ENCODE measurements at regions of chr14 and their contacts with region 1.

Region 1: DNA sequence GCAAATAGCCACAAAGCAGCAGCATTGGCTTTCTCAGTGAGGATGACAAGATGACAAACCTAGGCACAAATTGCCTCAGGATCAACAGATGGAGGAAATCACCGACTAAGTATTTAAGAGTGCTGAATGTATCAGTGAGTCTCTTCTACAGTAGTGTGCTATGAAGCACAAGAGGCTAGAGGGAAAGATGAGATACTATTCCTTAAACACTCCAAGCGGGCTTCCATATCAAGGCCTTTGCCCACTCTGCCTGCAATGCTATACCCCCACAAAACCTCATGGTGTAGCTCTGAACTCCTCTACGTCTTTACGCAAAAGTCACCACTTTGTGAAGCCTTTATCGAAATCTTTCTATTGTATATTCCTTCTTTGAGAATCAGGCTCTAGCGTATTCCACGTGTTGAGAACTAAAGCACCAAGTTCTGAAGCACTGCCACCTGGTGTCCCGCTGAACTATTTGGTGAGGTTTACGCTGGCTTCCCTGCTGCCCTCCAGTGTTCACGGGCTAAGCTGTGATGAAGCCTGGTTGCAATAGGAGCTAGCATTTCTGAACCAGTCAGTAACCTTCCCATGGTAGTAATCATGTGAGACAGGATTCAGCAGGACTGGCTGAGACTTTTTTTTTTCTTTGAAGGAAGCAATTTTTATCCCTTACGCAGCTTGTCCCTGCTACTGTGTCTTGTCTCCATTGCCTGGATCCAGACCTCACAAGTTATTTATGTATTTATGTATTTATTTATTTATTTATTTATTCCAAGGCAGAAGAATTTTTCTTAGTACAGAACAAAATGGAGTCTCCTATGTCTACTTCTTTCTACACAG is 426.5 kb upstream of the OR4E1 start:
- DNase-seq: peak; percentile 87
- H3K4me3 ChIP-seq: no peak overlapping the region
- H3K27ac ChIP-seq: no peak overlapping the region
- H3K4me1 ChIP-seq: peaks cover 0 to 37% (median 25%) of the 10 kb centered on the region in 4 donors
- H3K27me3 ChIP-seq: no peaks in the 10 kb centered on the region
- CTCF ChIP-seq: peak; percentile 41 to 64 (median 52)
- EP300 ChIP-seq: no peak
- POLR2A ChIP-seq: no peak

Region 2: GRCh38 chr14:22084393-22085281 is 15.5 kb before region 1 on chr14:
- intact Hi-C with region 1: loop called (anchors 2 kb)
- DNase-seq: no peak
- H3K4me3 ChIP-seq: no peak overlapping the region
- H3K27ac ChIP-seq: no peak overlapping the region
- H3K4me1 ChIP-seq: peaks cover 0 to 6% (median 0%) of the 10 kb centered on the region in 4 donors
- H3K27me3 ChIP-seq: no peaks in the 10 kb centered on the region
- CTCF ChIP-seq: peak; percentile 19 to 78 (median 52)
- EP300 ChIP-seq: no peak
- POLR2A ChIP-seq: no peak

Measured in sigmoid colon (tissue), 7 donors.